PC-9 (cell line): ENCODE measurements at regions of chr4 and their contacts with region 1.

Region 1: GRCh38 chr4:113094802-113095201 is 45.3 kb downstream of the ANK2 start:
- DNase-seq: no peak
- H3K4me3 ChIP-seq: no peak overlapping the region
- H3K27ac ChIP-seq: no peak overlapping the region
- H3K4me1 ChIP-seq: no peaks in the 10 kb centered on the region
- H3K27me3 ChIP-seq: no peaks in the 10 kb centered on the region
- CTCF ChIP-seq: peak; percentile 77

Region 2: DNA sequence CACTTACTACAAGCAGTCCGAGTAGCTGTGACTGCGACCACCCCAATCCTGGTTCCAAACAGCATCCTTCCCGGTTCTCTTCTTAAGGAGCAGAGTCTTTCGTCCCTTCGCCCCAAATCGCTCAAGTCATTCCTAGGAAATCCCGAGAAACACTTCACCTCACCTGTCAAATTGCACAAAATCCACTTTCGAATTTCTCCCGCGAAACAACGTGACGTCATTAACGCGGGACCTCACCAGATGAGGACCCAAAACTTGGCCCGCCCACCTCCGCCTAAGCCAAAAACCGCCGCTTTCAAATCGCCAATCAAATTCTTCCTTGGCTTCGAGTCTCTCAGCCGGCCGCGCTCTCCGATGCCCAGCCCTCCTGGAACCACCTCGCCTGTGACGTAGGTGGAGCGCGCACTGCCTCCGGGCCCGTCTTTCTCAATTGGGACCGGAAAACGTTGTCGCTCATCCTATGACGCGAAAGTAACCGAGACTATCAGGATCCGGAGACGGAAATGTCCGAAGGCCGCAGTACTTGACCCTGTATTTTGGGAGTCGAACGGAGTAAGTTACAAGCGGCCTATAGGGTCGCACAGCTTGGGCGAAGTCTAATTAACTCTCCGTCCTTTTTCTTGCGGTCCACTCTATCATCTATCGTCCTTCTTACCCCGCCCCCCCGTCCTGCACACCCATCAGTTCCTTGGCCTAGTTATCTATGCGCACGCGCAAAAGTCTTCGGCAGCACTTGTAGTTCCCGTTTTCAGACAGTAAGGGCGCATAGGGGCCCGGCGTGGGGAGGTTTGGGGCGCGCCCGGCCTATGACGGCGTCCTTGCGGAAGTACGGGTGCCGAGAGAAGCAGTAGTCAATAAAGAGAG is 457.9 kb before region 1 on chr4 and contains the starts of genes LARP7 and ZGRF1:
- CTCF ChIA-PET with region 1: no interaction called
- POLR2A ChIA-PET with region 1: no interaction called
- intact Hi-C with region 1: loop called (anchors 10 kb)
- DNase-seq: peak; percentile 97 to 98
- H3K4me3 ChIP-seq: peak within 1 kb of the TSS; percentile 76
- H3K27ac ChIP-seq: peak within 1 kb of the TSS; percentile 78
- H3K4me1 ChIP-seq: peaks cover 20% of the 10 kb centered on the region
- H3K27me3 ChIP-seq: no peaks in the 10 kb centered on the region
- CTCF ChIP-seq: peak; percentile 100
- total RNA-seq, gene LARP7: 35.8 and 47.8 TPM in 2 replicates
- total RNA-seq, gene ZGRF1: 17.3 and 18.9 TPM in 2 replicates

Region 3: GRCh38 chr4:112916868-112917267 is 177.9 kb before region 1 on chr4:
- CTCF ChIA-PET with region 1: interaction called, 11 read pairs
- POLR2A ChIA-PET with region 1: no interaction called
- intact Hi-C with region 1: no loop called
- DNase-seq: no peak
- H3K4me3 ChIP-seq: no peak overlapping the region
- H3K27ac ChIP-seq: no peak overlapping the region
- H3K4me1 ChIP-seq: no peaks in the 10 kb centered on the region
- H3K27me3 ChIP-seq: no peaks in the 10 kb centered on the region
- CTCF ChIP-seq: no peak

Region 4: GRCh38 chr4:112946127-112946526 is 148.7 kb before region 1 on chr4:
- CTCF ChIA-PET with region 1: no interaction called
- POLR2A ChIA-PET with region 1: no interaction called
- intact Hi-C with region 1: loop called (anchors 5 kb)
- DNase-seq: no peak
- H3K4me3 ChIP-seq: no peak overlapping the region
- H3K27ac ChIP-seq: no peak overlapping the region
- H3K4me1 ChIP-seq: no peaks in the 10 kb centered on the region
- H3K27me3 ChIP-seq: no peaks in the 10 kb centered on the region
- CTCF ChIP-seq: no peak